ENCODE measurements at regions of chr1 and their contacts with region 1.

Region 1: DNA sequence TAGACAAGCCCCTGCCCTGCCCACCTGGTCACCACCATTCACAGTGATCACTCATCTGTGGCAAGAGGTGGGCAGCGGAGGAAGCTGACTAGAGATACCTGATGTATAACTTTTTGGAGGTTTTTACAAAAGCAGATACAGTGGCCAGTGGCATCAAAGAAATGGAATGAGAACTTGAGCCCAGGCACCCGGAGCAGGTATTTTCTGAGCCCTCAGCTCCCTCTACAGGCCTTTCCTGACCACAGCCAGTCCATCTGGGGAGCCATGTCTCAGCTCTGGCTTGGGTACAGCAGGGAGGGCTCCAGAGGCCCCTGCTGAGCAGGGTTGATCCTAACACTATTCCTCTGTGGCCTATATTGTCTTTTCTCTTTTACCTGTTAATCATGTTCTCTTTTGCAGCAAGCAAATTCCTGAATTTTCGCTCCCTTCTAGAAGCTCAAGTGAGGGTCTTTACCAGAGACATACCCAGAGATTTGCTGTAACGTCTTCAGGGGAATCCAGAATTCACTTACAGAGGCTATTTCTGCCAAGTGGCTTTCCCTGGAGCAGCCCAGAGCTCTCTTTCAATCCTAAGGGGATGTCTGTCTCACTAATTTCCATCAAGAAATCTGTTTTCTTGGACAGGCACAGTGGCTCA is 27.3 kb downstream of the GPR157 start:
- ATAC-seq: peak; percentile 73 to 92 (median 84)
- H3K4me3 ChIP-seq: no peak overlapping the region
- H3K27ac ChIP-seq: no peak overlapping the region
- H3K4me1 ChIP-seq: no peaks in the 10 kb centered on the region

Region 2: DNA sequence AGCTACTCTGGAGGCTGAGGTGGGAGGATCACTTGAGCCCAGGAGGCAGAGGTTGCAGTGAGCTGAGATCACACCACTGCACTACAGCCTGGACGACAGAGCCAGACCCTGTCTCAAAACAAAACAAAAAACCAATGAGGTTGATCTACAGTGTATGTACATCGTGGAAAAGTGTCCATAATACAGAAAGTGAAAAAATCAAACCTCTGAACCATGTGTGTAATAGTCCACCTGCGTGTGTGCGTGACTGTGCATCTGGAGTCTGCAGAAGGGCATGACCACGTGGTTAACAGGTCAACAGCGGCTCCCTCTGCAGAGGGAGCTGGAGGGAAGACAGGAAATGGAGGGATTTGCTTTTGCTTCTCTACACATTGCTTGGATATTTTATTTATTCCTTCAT is 190.7 kb before region 1 on chr1:
- in situ Hi-C with region 1: loop called in 2 of 9 experiments (anchors 10 to 25 kb)
- ATAC-seq: peak in 1 of 8 experiments; percentile 80
- H3K4me3 ChIP-seq: no peak overlapping the region
- H3K27ac ChIP-seq: no peak overlapping the region
- H3K4me1 ChIP-seq: peaks cover 15 to 16% of the 10 kb centered on the region in 2 donors

Region 3: DNA sequence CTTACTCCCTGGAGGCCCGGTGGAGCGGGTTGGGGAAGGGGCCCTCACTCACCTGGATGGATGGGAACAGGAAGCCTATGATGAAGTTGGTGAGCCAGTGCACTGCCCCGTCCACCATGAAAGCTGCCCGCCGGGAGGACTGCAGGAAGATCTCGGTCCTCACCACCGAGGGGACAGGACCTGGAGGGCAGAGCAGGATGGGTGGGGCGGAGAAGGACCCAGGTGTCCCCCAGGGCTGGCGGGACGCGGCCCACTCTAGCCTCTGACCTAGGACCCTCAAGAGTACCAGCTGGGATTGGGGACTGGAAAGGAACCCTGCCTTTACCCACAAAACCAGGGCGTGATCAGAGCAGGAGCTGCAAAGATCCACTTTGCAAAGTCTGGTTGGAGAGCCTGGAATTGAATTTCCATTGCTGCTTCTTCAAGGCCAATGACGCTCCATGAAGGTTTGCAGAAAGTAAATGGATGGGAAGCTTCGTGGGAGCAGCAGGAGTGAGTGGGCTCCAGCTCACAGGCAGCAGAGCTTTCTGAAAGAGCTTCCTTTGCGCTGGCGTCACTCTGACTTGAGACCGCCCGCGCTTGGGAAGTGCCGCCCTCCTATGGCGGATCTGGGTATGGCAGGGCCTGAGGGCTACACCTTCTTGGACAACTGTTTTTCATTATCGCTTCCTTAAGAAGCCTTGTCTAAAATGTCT is 96.8 kb before region 1 on chr1:
- in situ Hi-C with region 1: loop called in 1 of 9 experiments (anchors 10 kb)
- ATAC-seq: peak; percentile 84 to 97 (median 92)
- H3K4me3 ChIP-seq: no peak overlapping the region
- H3K27ac ChIP-seq: no peak overlapping the region
- H3K4me1 ChIP-seq: peaks cover 0 to 8% of the 10 kb centered on the region in 2 donors